IMR-90 (cell line): ENCODE measurements at regions of chr6 and their contacts with region 1.

Region 1: GRCh38 chr6:80214436-80215022 is 108.1 kb downstream of the BCKDHB start:
- DNase-seq: peak; percentile 70
- ATAC-seq: peak; percentile 97
- H3K4me3 ChIP-seq: no peak overlapping the region
- H3K27ac ChIP-seq: no peak overlapping the region
- H3K4me1 ChIP-seq: peaks cover 2% of the 10 kb centered on the region; the same call in 1 of the 2 replicates
- H3K27me3 ChIP-seq: no peaks in the 10 kb centered on the region
- CTCF ChIP-seq: peak; percentile 87
- POLR2A ChIP-seq: no peak
- RAD21 ChIP-seq: peak; percentile 90

Region 2: GRCh38 chr6:79833264-79833963 is 381.1 kb before region 1 on chr6:
- CTCF ChIA-PET with region 1: no interaction called
- POLR2A ChIA-PET with region 1: no interaction called
- dilution Hi-C with region 1: no loop called
- in situ Hi-C with region 1: no loop called
- intact Hi-C with region 1: no loop called
- DNase-seq: no peak
- ATAC-seq: no peak
- H3K4me3 ChIP-seq: no peak overlapping the region
- H3K27ac ChIP-seq: no peak overlapping the region
- H3K4me1 ChIP-seq: no peaks in the 10 kb centered on the region
- H3K27me3 ChIP-seq: no peaks in the 10 kb centered on the region
- CTCF ChIP-seq: no peak
- POLR2A ChIP-seq: no peak
- RAD21 ChIP-seq: no peak

Region 3: GRCh38 chr6:80425089-80425823 is 210.7 kb after region 1 on chr6:
- CTCF ChIA-PET with region 1: interaction called, 6 read pairs
- POLR2A ChIA-PET with region 1: no interaction called
- dilution Hi-C with region 1: no loop called
- in situ Hi-C with region 1: no loop called
- intact Hi-C with region 1: loop called (anchors 10 kb)
- DNase-seq: peak; percentile 99
- ATAC-seq: peak; percentile 98
- H3K4me3 ChIP-seq: no peak overlapping the region
- H3K27ac ChIP-seq: peak overlapping the region; percentile 90; the same call in 1 of the 2 replicates
- H3K4me1 ChIP-seq: peaks cover 7% of the 10 kb centered on the region
- H3K27me3 ChIP-seq: no peaks in the 10 kb centered on the region
- CTCF ChIP-seq: peak; percentile 24; the same call in 1 of the 2 replicates
- POLR2A ChIP-seq: no peak
- RAD21 ChIP-seq: peak; percentile 16; the same call in 1 of the 2 replicates

Region 4: DNA sequence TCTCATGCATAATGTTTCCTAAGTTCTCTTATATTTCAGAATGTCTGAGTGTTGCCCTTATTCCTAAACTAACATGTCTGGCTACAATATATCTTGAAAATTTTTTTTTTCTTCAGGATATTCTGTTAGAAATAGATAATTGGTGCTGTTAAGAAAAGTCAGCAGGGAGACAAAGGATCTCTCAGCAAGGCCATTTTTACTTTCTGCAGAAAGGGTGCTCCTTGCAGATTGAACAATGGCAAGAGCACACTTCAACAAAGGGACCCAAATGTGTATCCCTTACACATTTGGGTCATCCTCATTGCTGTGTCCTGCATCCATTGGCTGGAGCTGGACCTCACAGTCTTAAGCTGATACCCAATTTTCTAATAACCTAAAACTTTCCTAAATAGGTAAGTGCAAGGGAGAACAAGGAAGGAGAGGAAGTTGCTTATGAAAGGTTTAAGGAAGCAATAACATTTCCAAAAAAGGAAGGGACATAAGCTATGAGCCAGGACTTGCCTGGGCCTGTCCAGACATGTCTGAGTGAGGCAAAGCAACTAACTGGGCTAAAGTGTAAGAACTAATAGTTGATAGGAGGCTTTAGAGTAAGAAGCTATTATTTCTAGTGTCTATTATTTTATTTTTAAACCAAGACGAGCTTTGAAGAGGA is 321.5 kb after region 1 on chr6:
- CTCF ChIA-PET with region 1: no interaction called
- POLR2A ChIA-PET with region 1: no interaction called
- dilution Hi-C with region 1: no loop called
- in situ Hi-C with region 1: no loop called
- intact Hi-C with region 1: loop called (anchors 5 kb)
- DNase-seq: peak; percentile 79
- ATAC-seq: no peak
- H3K4me3 ChIP-seq: no peak overlapping the region
- H3K27ac ChIP-seq: peak overlapping the region; percentile 92
- H3K4me1 ChIP-seq: peaks cover 9% of the 10 kb centered on the region; the same call in 1 of the 2 replicates
- H3K27me3 ChIP-seq: no peaks in the 10 kb centered on the region
- CTCF ChIP-seq: no peak
- POLR2A ChIP-seq: no peak
- RAD21 ChIP-seq: no peak

Region 5: DNA sequence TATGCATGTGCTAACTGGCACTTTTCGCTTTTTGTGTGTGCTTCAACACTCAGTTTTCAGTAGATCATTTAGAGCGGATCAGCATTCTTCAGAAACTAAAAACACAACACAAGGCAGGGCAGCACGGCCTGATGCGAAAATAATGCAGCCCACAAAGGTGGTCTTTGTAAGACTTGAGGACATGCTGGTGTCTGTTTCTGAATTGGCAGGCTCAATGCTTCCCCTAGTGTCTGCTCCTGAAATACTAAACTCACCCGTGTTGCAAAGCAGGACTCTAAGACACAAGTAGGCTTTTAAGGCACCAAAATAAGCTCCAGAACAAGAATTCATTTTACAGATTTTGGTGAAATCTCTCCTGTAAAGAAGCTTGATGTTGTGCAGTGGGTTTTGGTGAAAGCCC is 861.4 kb after region 1 on chr6:
- CTCF ChIA-PET with region 1: no interaction called
- POLR2A ChIA-PET with region 1: no interaction called
- dilution Hi-C with region 1: no loop called
- in situ Hi-C with region 1: no loop called
- intact Hi-C with region 1: loop called (anchors 5 kb)
- DNase-seq: peak; percentile 12
- ATAC-seq: peak; percentile 35; the same call in 1 of the 2 replicates
- H3K4me3 ChIP-seq: no peak overlapping the region
- H3K27ac ChIP-seq: no peak overlapping the region
- H3K4me1 ChIP-seq: no peaks in the 10 kb centered on the region
- H3K27me3 ChIP-seq: no peaks in the 10 kb centered on the region
- CTCF ChIP-seq: peak; percentile 39
- POLR2A ChIP-seq: no peak
- RAD21 ChIP-seq: peak; percentile 32; the same call in 1 of the 2 replicates

Region 6: GRCh38 chr6:81465859-81466258 is 1251.3 kb after region 1 on chr6:
- CTCF ChIA-PET with region 1: no interaction called
- POLR2A ChIA-PET with region 1: no interaction called
- dilution Hi-C with region 1: no loop called
- in situ Hi-C with region 1: no loop called
- intact Hi-C with region 1: loop called (anchors 5 kb)
- DNase-seq: peak; percentile 24
- ATAC-seq: no peak
- H3K4me3 ChIP-seq: no peak overlapping the region
- H3K27ac ChIP-seq: no peak overlapping the region
- H3K4me1 ChIP-seq: no peaks in the 10 kb centered on the region
- H3K27me3 ChIP-seq: no peaks in the 10 kb centered on the region
- CTCF ChIP-seq: peak; percentile 55
- POLR2A ChIP-seq: no peak
- RAD21 ChIP-seq: peak; percentile 56

Region 7: GRCh38 chr6:82006027-82006738 is 1791.7 kb after region 1 on chr6:
- CTCF ChIA-PET with region 1: no interaction called
- POLR2A ChIA-PET with region 1: no interaction called
- dilution Hi-C with region 1: no loop called
- in situ Hi-C with region 1: loop called (anchors 25 kb)
- intact Hi-C with region 1: no loop called
- DNase-seq: peak; percentile 40
- ATAC-seq: peak; percentile 79
- H3K4me3 ChIP-seq: no peak overlapping the region
- H3K27ac ChIP-seq: no peak overlapping the region
- H3K4me1 ChIP-seq: no peaks in the 10 kb centered on the region
- H3K27me3 ChIP-seq: no peaks in the 10 kb centered on the region
- CTCF ChIP-seq: peak; percentile 65
- POLR2A ChIP-seq: no peak
- RAD21 ChIP-seq: peak; percentile 80